ENCODE measurements at regions of chr11 and their contacts with region 1.

Region 1: DNA sequence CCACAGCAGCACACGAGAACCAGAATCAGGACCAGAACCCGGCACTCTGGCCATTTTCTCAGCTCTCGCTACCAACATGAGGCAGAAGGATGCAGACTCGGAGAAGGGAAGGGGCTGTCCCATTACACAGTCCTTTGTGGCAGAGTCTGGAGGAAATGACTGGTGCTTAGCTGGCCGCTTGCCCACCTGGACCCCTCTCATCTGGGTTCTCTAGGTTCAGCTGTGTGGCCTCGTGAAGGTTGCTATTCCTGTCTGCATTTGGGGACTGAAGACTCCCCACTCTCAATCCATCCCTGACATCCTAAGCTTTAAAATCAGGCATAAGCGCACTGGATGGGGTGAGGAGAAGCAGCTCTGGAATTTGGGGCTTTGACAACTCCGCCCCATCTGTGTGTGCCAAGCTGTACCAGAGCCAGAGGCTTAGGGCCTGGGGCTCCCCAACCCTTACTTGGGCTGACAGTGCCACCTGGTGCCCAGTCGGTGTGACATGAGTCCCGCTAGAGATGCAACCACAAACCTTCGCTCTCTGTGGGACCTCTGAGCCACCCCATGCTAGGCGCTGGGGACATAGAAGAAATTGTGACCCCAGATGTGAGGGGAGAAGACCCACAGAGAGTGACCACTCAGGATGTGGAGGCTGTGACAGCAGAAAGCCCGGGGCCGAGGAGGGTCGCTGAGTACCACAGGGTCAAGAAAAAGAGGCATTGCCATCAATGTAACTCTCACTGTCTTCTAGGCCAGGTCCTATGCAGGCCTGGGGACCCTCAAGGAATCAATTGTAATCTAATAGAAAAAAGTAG is 35.9 kb upstream of the FCHSD2 start:
- DNase-seq: peak; percentile 89
- ATAC-seq: peak; percentile 97
- H3K4me3 Mint-ChIP-seq: no peak overlapping the region
- H3K27ac Mint-ChIP-seq: no peak overlapping the region
- H3K4me1 Mint-ChIP-seq: peaks cover 35% of the 10 kb centered on the region
- H3K27me3 Mint-ChIP-seq: peaks cover 28% of the 10 kb centered on the region

Region 2: GRCh38 chr11:72814286-72815109 is 363.5 kb before region 1 on chr11 and contains the start of gene ATG16L2:
- CTCF ChIA-PET with region 1: interaction called, 12 read pairs
- DNase-seq: peak; percentile 92
- ATAC-seq: peak; percentile 75
- H3K4me3 Mint-ChIP-seq: peak within 1 kb of the TSS; percentile 100
- H3K27ac Mint-ChIP-seq: peak within 1 kb of the TSS; percentile 99
- H3K4me1 Mint-ChIP-seq: peaks cover 52% of the 10 kb centered on the region
- H3K27me3 Mint-ChIP-seq: no peaks in the 10 kb centered on the region
- total RNA-seq, gene ATG16L2: 103 to 168 TPM

Region 3: DNA sequence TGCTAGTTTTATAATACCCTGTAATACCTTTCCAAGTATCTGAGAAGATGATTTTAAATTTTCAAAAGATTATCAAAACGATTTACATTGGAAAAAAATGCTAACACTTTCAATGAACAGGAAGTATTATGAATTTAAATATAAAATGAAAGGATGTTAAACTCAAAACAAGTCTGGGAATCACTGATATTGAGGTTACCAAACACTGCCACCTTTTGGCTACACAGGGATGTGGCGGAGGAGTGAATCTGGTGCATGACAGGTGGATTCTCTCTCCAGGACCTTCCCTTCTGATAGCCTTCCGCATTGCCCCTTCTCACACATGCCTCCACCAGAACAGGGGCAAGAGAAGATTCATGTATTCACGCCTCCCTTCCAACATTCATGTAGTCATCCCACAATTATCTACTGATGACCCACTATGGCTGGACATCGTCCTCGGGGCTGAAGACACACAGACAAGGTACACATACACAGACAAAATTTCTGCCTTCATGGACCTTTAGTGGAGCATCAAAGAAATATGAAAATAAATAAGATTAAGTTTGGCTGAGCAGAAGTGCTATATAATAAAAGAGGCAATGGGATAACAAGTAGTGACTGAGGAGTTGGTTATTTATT is 329.0 kb before region 1 on chr11:
- CTCF ChIA-PET with region 1: interaction called, 10 read pairs
- DNase-seq: no peak
- ATAC-seq: peak; percentile 61
- H3K4me3 Mint-ChIP-seq: no peak overlapping the region
- H3K27ac Mint-ChIP-seq: peak overlapping the region; percentile 6
- H3K4me1 Mint-ChIP-seq: peaks cover 6% of the 10 kb centered on the region
- H3K27me3 Mint-ChIP-seq: no peaks in the 10 kb centered on the region

Region 4: GRCh38 chr11:73141848-73142286 is 36.1 kb before region 1 on chr11:
- CTCF ChIA-PET with region 1: interaction called, 74 read pairs
- DNase-seq: peak; percentile 80
- ATAC-seq: peak; percentile 59
- H3K4me3 Mint-ChIP-seq: peak overlapping the region; percentile 90
- H3K27ac Mint-ChIP-seq: peak overlapping the region; percentile 97
- H3K4me1 Mint-ChIP-seq: peaks cover 47% of the 10 kb centered on the region
- H3K27me3 Mint-ChIP-seq: no peaks in the 10 kb centered on the region

Region 5: GRCh38 chr11:73157053-73158010 is 20.6 kb before region 1 on chr11:
- CTCF ChIA-PET with region 1: interaction called, 65 read pairs
- DNase-seq: no peak
- ATAC-seq: no peak
- H3K4me3 Mint-ChIP-seq: no peak overlapping the region
- H3K27ac Mint-ChIP-seq: no peak overlapping the region
- H3K4me1 Mint-ChIP-seq: peaks cover 53% of the 10 kb centered on the region
- H3K27me3 Mint-ChIP-seq: no peaks in the 10 kb centered on the region

Region 6: GRCh38 chr11:73252577-73253195 is 74.7 kb after region 1 on chr11:
- CTCF ChIA-PET with region 1: no interaction called
- DNase-seq: peak; percentile 66
- ATAC-seq: peak; percentile 69
- H3K4me3 Mint-ChIP-seq: no peak overlapping the region
- H3K27ac Mint-ChIP-seq: no peak overlapping the region
- H3K4me1 Mint-ChIP-seq: peaks cover 7% of the 10 kb centered on the region
- H3K27me3 Mint-ChIP-seq: no peaks in the 10 kb centered on the region

Region 7: GRCh38 chr11:73262851-73263495 is 85.0 kb after region 1 on chr11:
- CTCF ChIA-PET with region 1: no interaction called
- DNase-seq: no peak
- ATAC-seq: no peak
- H3K4me3 Mint-ChIP-seq: no peak overlapping the region
- H3K27ac Mint-ChIP-seq: no peak overlapping the region
- H3K4me1 Mint-ChIP-seq: no peaks in the 10 kb centered on the region
- H3K27me3 Mint-ChIP-seq: peaks cover 48% of the 10 kb centered on the region